Ascending aorta (tissue), 2 donors: ENCODE measurements at regions of chr4 and their contacts with region 1.

Region 1: DNA sequence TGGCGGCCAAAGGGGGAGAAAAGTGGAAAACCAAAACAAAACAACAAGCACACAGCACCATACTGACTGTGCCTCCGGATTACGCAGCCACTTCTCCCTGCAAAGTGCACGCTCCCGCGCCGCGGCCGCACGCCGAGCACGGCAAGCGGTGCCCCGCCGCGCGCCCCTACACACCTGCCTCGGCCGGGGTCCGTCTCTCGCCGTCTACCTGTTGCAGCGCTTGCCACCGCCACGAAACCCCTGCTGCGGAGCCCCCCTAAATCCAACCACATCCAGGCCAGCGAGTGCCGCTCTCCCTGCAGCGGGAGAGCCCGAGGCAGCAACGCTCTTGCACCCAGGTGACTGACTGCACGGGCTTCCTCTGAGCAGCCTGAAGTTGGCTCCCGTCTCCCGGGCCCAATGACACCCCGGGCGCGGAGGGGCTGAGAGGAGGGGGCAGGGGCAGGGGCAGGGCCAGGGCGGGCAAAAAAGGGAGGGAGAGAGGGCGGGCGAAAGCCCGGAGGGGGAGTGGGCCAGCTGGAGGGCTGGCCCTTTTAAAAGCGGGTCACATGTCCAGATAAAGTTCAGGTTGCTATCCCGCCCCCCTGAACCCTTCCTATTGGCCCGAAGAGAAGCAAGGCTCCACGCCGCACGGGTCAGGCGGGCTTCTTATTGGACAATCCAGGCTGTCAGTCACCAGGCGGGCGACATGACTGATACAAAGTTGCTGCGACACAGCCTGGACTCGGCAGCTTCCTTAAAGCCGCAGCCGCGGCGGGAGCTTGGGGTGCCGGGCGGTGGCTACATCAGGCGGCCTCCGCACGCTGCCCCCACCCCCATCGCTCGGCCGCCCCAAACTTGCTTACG is at the start of gene NR3C2:
- DNase-seq: peak; percentile 98 to 100
- H3K4me3 ChIP-seq: peak within 1 kb of the TSS; percentile 92 to 99
- H3K27ac ChIP-seq: peak within 1 kb of the TSS; percentile 95 to 96
- H3K4me1 ChIP-seq: peaks cover 0 to 14% of the 10 kb centered on the region in 2 donors
- H3K27me3 ChIP-seq: no peaks in the 10 kb centered on the region
- CTCF ChIP-seq: no peak
- total RNA-seq, gene NR3C2: 42.3 TPM

Region 2: GRCh38 chr4:147683717-147684700 is 758.2 kb before region 1 on chr4 and contains the start of gene PRMT9:
- intact Hi-C with region 1: loop called (anchors 10 kb)
- DNase-seq: peak; percentile 43 to 94
- H3K4me3 ChIP-seq: peak within 1 kb of the TSS; percentile 84 to 94
- H3K27ac ChIP-seq: peak within 1 kb of the TSS; percentile 85 to 87
- H3K4me1 ChIP-seq: peaks cover 0 to 10% of the 10 kb centered on the region in 2 donors
- H3K27me3 ChIP-seq: no peaks in the 10 kb centered on the region
- CTCF ChIP-seq: no peak
- total RNA-seq, gene PRMT9: 1.6 TPM

Region 3: GRCh38 chr4:148166132-148166591 is 276.0 kb before region 1 on chr4:
- intact Hi-C with region 1: loop called (anchors 5 kb)
- DNase-seq: no peak
- H3K4me3 ChIP-seq: peak overlapping the region; percentile 28 to 47
- H3K27ac ChIP-seq: peak overlapping the region; percentile 54 to 62
- H3K4me1 ChIP-seq: peaks cover 0 to 24% of the 10 kb centered on the region in 2 donors
- H3K27me3 ChIP-seq: no peaks in the 10 kb centered on the region
- CTCF ChIP-seq: no peak

Region 4: GRCh38 chr4:148330161-148330560 is 112.0 kb before region 1 on chr4:
- intact Hi-C with region 1: no loop called
- DNase-seq: no peak
- H3K4me3 ChIP-seq: no peak overlapping the region
- H3K27ac ChIP-seq: no peak overlapping the region
- H3K4me1 ChIP-seq: no peaks in the 10 kb centered on the region
- H3K27me3 ChIP-seq: no peaks in the 10 kb centered on the region
- CTCF ChIP-seq: no peak

Region 5: GRCh38 chr4:150010525-150011126 is 1568.4 kb after region 1 on chr4:
- intact Hi-C with region 1: loop called (anchors 5 kb)
- DNase-seq: peak in 1 of 2 donors; percentile 68
- H3K4me3 ChIP-seq: no peak overlapping the region
- H3K27ac ChIP-seq: no peak overlapping the region
- H3K4me1 ChIP-seq: peaks cover 4 to 19% of the 10 kb centered on the region in 2 donors
- H3K27me3 ChIP-seq: no peaks in the 10 kb centered on the region
- CTCF ChIP-seq: peak; percentile 39 to 59 (median 54)